ENCODE measurements at regions of chr1 and their contacts with region 1.

Region 1: DNA sequence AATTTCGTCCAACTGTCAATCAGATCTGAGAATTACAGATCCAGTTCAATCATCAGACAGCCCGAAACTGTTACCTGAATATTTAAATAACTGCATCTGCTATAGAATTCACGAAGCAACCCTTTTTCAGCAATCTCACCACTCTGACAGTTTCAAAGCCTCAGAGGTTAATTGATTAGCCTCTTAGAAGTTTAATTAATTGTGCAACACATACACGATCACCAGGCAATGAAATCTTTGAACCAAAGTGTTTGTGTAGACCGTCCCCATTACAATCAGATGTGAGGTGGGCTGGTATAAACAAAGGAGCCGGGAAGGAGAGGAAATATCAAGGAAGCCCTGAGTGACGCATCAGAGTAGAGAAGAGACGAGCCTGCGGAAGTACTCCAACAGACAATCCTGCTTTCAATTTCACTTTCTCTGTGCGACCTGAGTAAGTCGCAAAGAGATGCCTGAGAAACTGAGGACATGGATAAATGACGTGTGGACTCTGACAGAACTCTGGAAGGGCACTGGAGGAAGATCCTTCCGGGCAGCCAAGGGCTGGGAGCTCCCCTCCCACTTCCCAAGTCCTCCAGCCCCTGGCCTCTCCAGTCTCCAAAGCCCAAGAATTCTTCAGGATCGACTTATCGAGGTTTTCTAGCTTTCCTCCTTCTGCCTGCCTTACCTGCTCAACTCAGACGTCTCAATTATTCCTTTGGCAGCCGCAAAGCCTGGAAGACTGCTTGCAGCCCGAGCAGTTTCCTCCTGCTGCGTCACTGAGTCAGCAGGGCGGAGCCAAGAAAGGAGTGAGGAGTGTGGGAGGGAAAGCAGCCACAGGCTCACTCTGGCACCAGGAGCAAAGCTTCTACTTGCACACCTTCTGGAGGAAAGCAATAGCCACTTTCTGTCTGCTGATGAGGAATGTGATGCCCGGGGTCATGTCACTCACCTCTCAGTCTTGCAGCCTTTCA is at the start of gene RNASEL:
- DNase-seq: peak; percentile 39
- ATAC-seq: peak; percentile 90
- H3K4me3 Mint-ChIP-seq: peak within 1 kb of the TSS; percentile 92
- H3K27ac Mint-ChIP-seq: peak within 1 kb of the TSS; percentile 96
- H3K4me1 Mint-ChIP-seq: peaks cover 52% of the 10 kb centered on the region
- H3K27me3 Mint-ChIP-seq: no peaks in the 10 kb centered on the region
- CTCF ChIP-seq: no peak
- total RNA-seq, gene RNASEL: 10.0 and 11.1 TPM in 2 replicates

Region 2: DNA sequence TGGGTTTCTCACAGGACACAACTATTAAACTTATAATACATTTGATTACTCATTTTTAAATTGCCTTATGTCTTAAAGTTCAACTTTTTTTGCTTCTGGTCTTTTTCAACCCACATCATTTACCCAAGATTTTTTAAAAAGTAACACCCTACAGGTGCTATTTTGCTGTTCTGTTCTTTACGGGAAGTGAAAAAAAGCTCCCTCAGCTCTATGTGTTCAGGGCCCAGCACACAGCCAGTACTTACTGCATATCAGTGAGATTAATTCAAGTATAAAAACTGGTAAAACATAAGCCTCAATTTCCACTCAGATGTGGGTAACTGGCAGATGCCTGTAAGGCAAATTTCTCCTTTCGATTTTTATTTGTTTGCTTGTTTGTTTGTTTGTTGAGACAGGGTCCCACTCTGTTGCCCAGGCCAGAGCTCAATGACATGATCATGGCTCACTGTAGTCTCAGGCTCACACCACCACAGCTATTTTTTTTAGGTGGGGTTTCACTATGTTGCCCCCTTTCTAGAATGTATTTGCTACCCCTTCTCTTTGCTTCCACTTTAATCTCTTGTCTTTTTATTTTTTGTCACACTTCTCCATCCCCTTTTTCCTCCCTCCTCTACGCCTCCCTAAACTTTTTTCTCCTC is 20.0 kb before region 1 on chr1:
- CTCF ChIA-PET with region 1: interaction called, 3 read pairs
- POLR2A ChIA-PET with region 1: interaction called, 24 read pairs
- intact Hi-C with region 1: loop called (anchors 2 kb)
- DNase-seq: no peak
- ATAC-seq: peak; percentile 65
- H3K4me3 Mint-ChIP-seq: no peak overlapping the region
- H3K27ac Mint-ChIP-seq: no peak overlapping the region
- H3K4me1 Mint-ChIP-seq: peaks cover 21% of the 10 kb centered on the region
- H3K27me3 Mint-ChIP-seq: no peaks in the 10 kb centered on the region
- CTCF ChIP-seq: no peak

Measured in activated B cell treated with CpG ODN at 0.5 μM for 24 hours (primary cell).